ENCODE measurements at regions of chr17 and their contacts with region 1.

Region 1: DNA sequence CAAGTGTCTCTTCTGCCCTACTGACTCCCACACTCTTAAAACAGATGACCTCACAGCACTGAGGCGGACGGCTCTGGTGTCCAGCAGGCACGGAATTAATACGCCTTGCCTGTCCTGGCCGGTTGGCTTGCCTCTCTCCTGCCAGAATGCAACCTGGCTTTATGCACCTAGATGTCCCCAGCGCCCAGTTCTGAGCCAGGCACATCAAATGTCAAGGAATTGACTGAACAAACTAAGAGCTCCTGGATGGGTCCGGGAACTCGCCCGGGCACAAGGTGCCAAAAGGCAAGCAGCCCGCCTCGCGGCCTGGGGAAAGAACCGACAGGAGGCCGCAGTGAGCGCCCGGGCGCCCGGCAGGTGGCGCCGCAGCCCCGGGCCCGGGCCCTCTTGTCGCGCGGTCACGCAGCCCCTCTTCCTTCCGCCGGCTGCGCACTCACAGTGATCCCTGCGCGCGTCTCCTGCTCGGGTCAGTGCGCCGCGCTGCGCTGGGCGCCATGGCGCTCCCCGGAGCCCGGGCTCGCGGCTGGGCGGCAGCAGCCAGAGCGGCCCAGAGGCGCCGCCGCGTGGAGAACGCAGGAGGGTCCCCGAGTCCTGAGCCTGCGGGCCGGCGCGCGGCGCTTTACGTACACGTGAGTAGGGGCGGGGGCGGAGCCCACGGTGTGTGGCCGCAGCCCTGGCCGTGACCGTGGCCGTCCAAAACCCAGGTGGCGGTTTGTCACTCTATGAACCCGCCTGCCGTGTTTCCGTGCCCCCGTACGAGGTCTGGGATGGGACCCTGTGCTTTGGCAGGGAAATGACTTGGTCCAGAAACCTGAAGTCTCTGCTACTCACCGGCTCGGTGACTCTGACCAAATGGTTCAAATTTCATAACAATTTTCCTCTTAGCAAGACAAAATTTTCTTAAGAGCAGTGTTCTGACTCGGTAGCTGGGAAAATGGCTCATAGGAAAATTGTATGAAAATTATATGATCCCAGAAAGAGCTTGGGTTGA is at the start of gene RSAD1:
- DNase-seq: peak; percentile 94
- H3K4me3 ChIP-seq: peak within 1 kb of the TSS; percentile 88
- H3K27ac ChIP-seq: peak within 1 kb of the TSS; percentile 67
- H3K4me1 ChIP-seq: peaks cover 8% of the 10 kb centered on the region
- H3K27me3 ChIP-seq: no peaks in the 10 kb centered on the region
- total RNA-seq, gene RSAD1: 19.3 and 19.8 TPM in 2 replicates

Region 2: DNA sequence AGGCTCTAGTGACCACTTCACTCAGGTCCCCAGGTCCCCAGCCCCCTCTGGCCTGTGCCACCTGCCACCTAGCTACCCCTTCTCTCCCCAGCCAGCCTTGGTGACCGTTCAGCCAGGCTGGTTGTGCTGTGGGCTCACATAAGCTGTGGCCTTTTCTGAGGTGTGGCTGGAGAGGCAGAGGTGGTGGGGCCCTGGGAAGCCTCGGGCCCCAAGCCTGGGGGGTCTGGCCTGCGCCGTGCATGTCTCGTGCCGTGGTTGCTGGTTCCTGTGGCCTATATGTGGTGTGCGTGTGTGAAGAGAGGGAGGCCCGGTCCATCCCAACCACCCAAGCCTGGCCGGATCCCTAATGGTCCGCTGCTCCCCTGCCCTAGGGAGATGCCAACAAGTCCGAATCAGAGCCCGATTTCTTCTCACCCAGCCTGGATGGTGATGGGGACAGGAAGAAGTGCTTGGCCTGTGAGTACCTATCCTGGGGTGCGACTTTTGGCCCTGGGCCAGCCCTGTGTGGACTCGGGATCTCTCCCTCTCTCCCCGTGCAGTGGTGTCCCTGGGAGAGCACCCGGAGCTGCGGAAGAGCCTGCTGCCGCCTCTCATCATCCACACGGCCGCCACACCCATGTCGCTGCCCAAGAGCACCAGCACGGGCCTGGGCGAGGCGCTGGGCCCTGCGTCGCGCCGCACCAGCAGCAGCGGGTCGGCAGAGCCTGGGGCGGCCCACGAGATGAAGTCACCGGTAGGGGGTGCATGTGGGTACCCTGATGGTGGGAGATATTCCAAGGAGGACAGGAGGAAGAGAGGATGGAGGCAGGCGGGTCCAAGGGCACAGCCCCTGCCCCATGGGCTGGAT is 117.7 kb after region 1 on chr17:
- in situ Hi-C with region 1: loop called (anchors 25 kb)
- DNase-seq: no peak
- H3K4me3 ChIP-seq: no peak overlapping the region
- H3K27ac ChIP-seq: no peak overlapping the region
- H3K4me1 ChIP-seq: no peaks in the 10 kb centered on the region
- H3K27me3 ChIP-seq: no peaks in the 10 kb centered on the region